ENCODE measurements at regions of chr11 and their contacts with region 1.

Region 1: DNA sequence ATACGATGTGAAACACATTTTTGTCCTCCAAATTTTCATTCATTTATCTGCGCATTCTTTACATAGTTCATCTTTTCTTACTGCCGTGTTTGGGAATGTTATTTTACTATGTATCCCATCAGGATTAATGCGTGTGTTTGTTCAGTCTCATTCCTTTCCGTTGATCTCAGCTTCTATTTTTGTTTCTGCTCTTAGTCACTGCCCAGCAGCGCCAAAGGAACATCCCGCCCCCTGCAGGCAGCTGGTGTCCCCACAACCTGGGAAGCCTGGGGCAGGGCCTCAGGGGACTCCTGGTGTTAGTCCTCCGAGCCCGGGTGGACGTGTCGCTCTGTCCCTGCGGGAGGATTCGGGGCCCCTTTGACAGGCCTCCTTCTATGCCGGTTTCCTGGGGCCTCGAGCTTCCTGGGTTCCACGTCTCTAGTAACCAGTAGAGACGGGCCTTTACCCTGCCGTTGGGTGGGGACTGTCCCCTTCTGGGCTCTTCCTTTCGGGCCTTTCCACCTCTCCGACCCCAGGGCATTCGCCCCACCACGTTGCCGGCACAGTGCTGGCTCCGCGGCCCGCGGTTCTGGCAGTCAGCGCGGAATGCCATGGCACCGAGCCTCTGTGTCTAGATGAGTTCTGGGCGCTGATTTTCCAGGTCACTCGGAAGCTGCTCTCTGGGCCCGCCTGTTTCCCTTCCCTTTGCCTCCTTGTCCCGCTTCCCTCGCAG is 39.8 kb downstream of the WEE1 start:
- DNase-seq: peak; percentile 63 to 88 (median 76)
- ATAC-seq: peak; percentile 70
- H3K4me3 ChIP-seq: peak overlapping the region; percentile 71
- H3K4me3 Mint-ChIP-seq: peak overlapping the region; percentile 94 to 99 (median 96)
- H3K27ac ChIP-seq: peak overlapping the region; percentile 75
- H3K27ac Mint-ChIP-seq: peak overlapping the region; percentile 82 to 98 (median 92)
- H3K4me1 ChIP-seq: peaks cover 0 to 14% of the 10 kb centered on the region in 2 donors
- H3K4me1 Mint-ChIP-seq: peaks cover 9 to 34% (median 18%) of the 10 kb centered on the region in 7 donors
- H3K27me3 ChIP-seq: no peaks in the 10 kb centered on the region
- H3K27me3 Mint-ChIP-seq: no peaks in the 10 kb centered on the region

Region 2: DNA sequence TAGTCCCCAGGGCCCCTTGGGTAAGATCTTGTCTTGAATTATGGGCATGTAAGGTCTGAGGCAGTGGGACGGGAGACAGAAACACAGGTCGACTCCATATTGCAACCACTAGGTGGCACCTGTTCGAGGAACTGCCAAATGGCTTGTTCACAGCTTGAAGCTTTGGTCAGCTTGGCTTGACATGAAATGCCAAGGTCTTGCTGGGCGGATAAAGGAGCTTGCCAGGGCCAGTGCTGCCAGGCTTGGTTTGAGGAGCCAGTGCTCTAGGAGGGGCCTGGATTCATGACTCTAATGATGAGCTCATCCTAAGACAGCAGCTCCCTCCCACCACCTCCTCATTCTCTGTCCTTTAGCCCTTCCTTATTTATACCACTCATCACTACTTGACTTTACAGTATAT is 597.6 kb before region 1 on chr11:
- CTCF ChIA-PET with region 1: no interaction called
- POLR2A ChIA-PET with region 1: no interaction called
- intact Hi-C with region 1: no loop called
- DNase-seq: peak; percentile 20 to 59 (median 45)
- ATAC-seq: peak; percentile 82
- H3K4me3 ChIP-seq: no peak overlapping the region
- H3K4me3 Mint-ChIP-seq: no peak overlapping the region
- H3K27ac ChIP-seq: no peak overlapping the region
- H3K27ac Mint-ChIP-seq: no peak overlapping the region
- H3K4me1 ChIP-seq: peaks cover 0 to 9% of the 10 kb centered on the region in 2 donors
- H3K4me1 Mint-ChIP-seq: peaks cover 0 to 28% (median 18%) of the 10 kb centered on the region in 7 donors
- H3K27me3 ChIP-seq: no peaks in the 10 kb centered on the region
- H3K27me3 Mint-ChIP-seq: peaks cover 0 to 20% (median 7%) of the 10 kb centered on the region in 5 donors

Region 3: DNA sequence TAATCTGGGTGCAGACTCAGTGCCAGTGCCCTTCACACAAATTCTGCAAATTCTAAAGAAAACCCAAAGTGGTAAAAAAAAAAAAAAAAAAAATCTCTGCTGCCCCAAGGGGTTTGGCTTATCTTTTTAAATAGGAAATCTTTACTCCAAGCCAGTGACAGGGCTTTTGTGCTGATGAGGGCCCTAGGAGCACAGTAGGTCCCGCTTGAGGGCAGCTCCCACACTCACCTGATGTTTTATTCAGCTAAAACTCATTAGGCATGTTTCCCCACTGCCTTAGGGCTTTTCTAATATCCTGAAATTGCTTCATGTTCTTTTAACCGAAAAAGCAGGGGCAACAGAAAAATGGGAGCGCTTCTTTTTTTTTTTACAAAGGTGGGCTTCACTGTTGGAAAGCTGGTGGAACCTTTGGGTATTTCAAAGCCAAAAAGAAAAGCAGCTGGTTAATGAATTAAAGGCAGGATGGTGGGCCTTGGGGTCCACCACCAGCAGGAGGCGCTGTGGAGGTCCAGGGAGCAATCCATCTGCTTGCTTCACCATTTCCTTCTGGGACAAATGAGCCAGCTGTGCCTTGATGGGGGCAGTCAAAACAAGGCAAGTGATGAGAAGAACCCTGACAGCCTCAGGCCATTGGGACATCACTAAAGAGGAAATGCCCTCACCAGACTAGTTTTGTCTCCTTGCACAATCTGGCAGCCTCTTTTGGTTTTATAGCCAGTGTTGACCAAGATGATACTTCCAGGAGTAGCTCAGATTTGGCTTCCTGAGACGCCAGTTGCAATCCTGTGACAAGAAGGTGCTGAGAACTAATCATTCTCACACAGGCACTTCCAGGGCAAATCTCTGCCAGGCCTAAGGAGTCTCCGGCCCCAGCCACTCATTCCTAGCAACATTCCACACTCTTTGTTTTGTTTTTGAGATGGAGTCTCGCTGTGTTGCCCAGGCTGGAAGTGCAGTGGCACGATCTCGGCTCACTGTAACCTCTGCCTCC is 78.2 kb before region 1 on chr11:
- CTCF ChIA-PET with region 1: interaction called, 68 read pairs
- POLR2A ChIA-PET with region 1: interaction called, 3 read pairs
- intact Hi-C with region 1: loop called in 1 of 2 experiments (anchors 1 kb)
- DNase-seq: peak; percentile 34 to 83 (median 62)
- ATAC-seq: peak; percentile 84
- H3K4me3 ChIP-seq: no peak overlapping the region
- H3K4me3 Mint-ChIP-seq: no peak overlapping the region
- H3K27ac ChIP-seq: no peak overlapping the region
- H3K27ac Mint-ChIP-seq: no peak overlapping the region
- H3K4me1 ChIP-seq: no peaks in the 10 kb centered on the region
- H3K4me1 Mint-ChIP-seq: no peaks in the 10 kb centered on the region
- H3K27me3 ChIP-seq: no peaks in the 10 kb centered on the region
- H3K27me3 Mint-ChIP-seq: no peaks in the 10 kb centered on the region

Region 4: DNA sequence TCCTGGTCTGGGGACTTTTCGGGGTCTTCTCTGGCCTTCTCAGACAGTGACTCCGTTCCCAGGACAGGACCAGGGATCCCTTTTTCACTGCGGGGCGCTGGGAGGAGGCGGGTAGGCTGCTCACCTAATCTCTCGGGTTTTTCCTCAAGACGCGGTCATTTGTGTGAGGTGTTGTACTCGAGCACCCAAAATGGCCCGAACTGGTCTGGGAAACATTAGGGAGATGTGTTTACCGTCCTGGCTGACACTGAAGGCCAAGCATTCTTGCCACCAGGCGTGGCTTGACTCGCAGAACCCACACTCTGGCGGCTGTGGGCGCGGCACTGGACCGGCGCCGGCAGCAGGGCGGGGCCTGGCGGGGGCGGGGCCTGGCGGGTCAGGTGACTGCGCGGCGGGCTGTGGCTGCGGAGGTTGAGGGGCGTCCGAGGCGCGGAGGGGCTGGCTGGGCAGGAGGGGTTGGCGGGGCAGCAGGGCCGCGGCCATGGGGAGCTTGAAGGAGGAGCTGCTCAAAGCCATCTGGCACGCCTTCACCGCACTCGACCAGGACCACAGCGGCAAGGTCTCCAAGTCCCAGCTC is 50.5 kb after region 1 on chr11 and contains the start of gene SWAP70:
- CTCF ChIA-PET with region 1: no interaction called
- POLR2A ChIA-PET with region 1: no interaction called
- intact Hi-C with region 1: loop called (anchors 1 to 2 kb)
- DNase-seq: peak; percentile 15 to 89 (median 48)
- ATAC-seq: peak; percentile 91
- H3K4me3 ChIP-seq: peak within 1 kb of the TSS; percentile 58
- H3K4me3 Mint-ChIP-seq: peak within 1 kb of the TSS; percentile 79 to 93 (median 87)
- H3K27ac ChIP-seq: peak within 1 kb of the TSS; percentile 9
- H3K27ac Mint-ChIP-seq: peak within 1 kb of the TSS in 8 of 9 donors; percentile 7 to 81 (median 38)
- H3K4me1 ChIP-seq: peaks cover 5 to 6% of the 10 kb centered on the region in 2 donors
- H3K4me1 Mint-ChIP-seq: peaks cover 7 to 25% (median 17%) of the 10 kb centered on the region in 7 donors
- H3K27me3 ChIP-seq: peaks cover 0 to 4% of the 10 kb centered on the region in 2 donors
- H3K27me3 Mint-ChIP-seq: peaks cover 18 to 51% (median 38%) of the 10 kb centered on the region in 5 donors
- total RNA-seq, gene SWAP70: 4.2 to 15.6 (median 7.0) TPM

Region 5: GRCh38 chr11:9972989-9973388 is 359.7 kb after region 1 on chr11:
- CTCF ChIA-PET with region 1: interaction called, 3 read pairs
- POLR2A ChIA-PET with region 1: no interaction called
- intact Hi-C with region 1: loop called (anchors 1 to 2 kb)
- DNase-seq: peak in 5 of 9 donors; percentile 10 to 42 (median 24)
- ATAC-seq: peak; percentile 72
- H3K4me3 ChIP-seq: no peak overlapping the region
- H3K4me3 Mint-ChIP-seq: no peak overlapping the region
- H3K27ac ChIP-seq: no peak overlapping the region
- H3K27ac Mint-ChIP-seq: no peak overlapping the region
- H3K4me1 ChIP-seq: no peaks in the 10 kb centered on the region
- H3K4me1 Mint-ChIP-seq: peaks cover 0 to 2% (median 0%) of the 10 kb centered on the region in 7 donors
- H3K27me3 ChIP-seq: no peaks in the 10 kb centered on the region
- H3K27me3 Mint-ChIP-seq: no peaks in the 10 kb centered on the region

Region 6: GRCh38 chr11:10716127-10716526 is 1102.9 kb after region 1 on chr11:
- CTCF ChIA-PET with region 1: no interaction called
- POLR2A ChIA-PET with region 1: no interaction called
- intact Hi-C with region 1: no loop called
- DNase-seq: no peak
- ATAC-seq: no peak
- H3K4me3 ChIP-seq: no peak overlapping the region
- H3K4me3 Mint-ChIP-seq: no peak overlapping the region
- H3K27ac ChIP-seq: no peak overlapping the region
- H3K27ac Mint-ChIP-seq: no peak overlapping the region
- H3K4me1 ChIP-seq: no peaks in the 10 kb centered on the region
- H3K4me1 Mint-ChIP-seq: no peaks in the 10 kb centered on the region
- H3K27me3 ChIP-seq: no peaks in the 10 kb centered on the region
- H3K27me3 Mint-ChIP-seq: peaks cover 0 to 18% (median 10%) of the 10 kb centered on the region in 5 donors

Measured in naive thymus-derived CD4-positive, alpha-beta T cell (primary cell).